ENCODE measurements at regions of chr2 and their contacts with region 1.

Region 1: GRCh38 chr2:169141713-169142352 is 72.5 kb downstream of the DHRS9 start:
- DNase-seq: peak in 4 of 6 donors; percentile 32 to 67 (median 42)
- ATAC-seq: peak; percentile 63 to 85 (median 82)
- H3K4me3 ChIP-seq: no peak overlapping the region
- H3K27ac ChIP-seq: no peak overlapping the region
- H3K4me1 ChIP-seq: no peaks in the 10 kb centered on the region
- H3K27me3 ChIP-seq: no peaks in the 10 kb centered on the region
- CTCF ChIP-seq: peak; percentile 40 to 83 (median 68)

Region 2: DNA sequence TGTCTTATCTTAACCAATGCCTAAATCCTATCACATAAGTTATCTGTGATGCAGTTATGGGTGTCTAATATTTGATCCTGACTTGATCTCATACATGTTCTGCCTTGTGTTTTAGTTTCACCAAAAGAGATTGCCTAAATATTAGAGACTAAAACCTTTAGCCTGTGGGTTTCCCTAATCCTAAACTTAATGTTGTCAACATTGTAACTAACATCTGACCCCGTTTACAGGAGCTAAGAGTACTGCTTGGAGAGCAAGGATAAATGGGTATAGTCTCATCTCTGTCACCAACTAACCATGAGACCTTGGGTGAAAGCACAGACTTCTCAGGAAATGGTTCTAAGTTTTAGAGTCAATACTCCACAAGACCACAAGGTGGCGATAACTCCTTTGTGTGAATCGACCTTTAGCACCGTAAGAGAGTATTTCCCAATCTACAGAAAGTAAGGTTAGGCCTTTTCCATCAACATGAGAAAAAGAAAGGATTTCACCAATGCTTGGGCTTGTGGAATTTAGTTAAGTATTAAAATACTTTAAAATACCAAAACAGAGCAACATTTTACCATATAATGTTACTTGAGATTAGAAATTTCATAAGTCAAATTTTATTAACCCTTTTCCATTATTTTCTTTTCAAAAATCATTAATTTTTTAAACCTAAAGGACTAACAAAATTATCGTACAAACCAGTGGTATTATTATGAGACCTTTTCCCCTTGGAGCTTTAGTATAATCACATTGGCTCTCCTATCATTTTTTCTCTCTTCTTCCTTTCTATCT is 180.2 kb before region 1 on chr2:
- intact Hi-C with region 1: loop called in 1 of 3 experiments (anchors 10 kb)
- DNase-seq: peak in 3 of 6 donors; percentile 13 to 55 (median 23)
- ATAC-seq: peak; percentile 94 to 100 (median 96)
- H3K4me3 ChIP-seq: no peak overlapping the region
- H3K27ac ChIP-seq: no peak overlapping the region
- H3K4me1 ChIP-seq: no peaks in the 10 kb centered on the region
- H3K27me3 ChIP-seq: no peaks in the 10 kb centered on the region
- CTCF ChIP-seq: peak; percentile 69 to 84 (median 72)

Measured in pancreas (tissue), 10 donors.